Mammary epithelial cell (primary cell): ENCODE measurements at regions of chr16 and their contacts with region 1.

Region 1: GRCh38 chr16:29805378-29806098 is 791 bp upstream of the MAZ start:
- DNase-seq: peak; percentile 96
- H3K4me3 ChIP-seq: peak overlapping the region; percentile 74 to 89 (median 76)
- H3K27ac ChIP-seq: peak overlapping the region; percentile 56
- H3K4me1 ChIP-seq: peaks cover 31% of the 10 kb centered on the region
- H3K27me3 ChIP-seq: no peaks in the 10 kb centered on the region
- CTCF ChIP-seq: no peak

Region 2: DNA sequence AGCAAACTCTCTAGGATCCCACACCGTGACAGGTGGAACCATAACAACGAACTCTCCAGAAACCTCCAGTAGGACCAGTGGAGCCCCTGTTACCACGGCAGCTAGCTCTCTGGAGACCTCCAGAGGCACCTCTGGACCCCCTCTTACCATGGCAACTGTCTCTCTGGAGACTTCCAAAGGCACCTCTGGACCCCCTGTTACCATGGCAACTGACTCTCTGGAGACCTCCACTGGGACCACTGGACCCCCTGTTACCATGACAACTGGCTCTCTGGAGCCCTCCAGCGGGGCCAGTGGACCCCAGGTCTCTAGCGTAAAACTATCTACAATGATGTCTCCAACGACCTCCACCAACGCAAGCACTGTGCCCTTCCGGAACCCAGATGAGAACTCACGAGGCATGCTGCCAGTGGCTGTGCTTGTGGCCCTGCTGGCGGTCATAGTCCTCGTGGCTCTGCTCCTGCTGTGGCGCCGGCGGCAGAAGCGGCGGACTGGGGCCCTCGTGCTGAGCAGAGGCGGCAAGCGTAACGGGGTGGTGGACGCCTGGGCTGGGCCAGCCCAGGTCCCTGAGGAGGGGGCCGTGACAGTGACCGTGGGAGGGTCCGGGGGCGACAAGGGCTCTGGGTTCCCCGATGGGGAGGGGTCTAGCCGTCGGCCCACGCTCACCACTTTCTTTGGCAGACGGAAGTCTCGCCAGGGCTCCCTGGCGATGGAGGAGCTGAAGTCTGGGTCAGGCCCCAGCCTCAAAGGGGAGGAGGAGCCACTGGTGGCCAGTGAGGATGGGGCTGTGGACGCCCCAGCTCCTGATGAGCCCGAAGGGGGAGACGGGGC is 141.2 kb before region 1 on chr16:
- CTCF ChIA-PET with region 1: no interaction called
- dilution Hi-C with region 1: loop called (anchors 5 kb)
- in situ Hi-C with region 1: no loop called
- intact Hi-C with region 1: no loop called
- DNase-seq: no peak
- H3K4me3 ChIP-seq: no peak overlapping the region
- H3K27ac ChIP-seq: no peak overlapping the region
- H3K4me1 ChIP-seq: no peaks in the 10 kb centered on the region
- H3K27me3 ChIP-seq: no peaks in the 10 kb centered on the region
- CTCF ChIP-seq: no peak

Region 3: DNA sequence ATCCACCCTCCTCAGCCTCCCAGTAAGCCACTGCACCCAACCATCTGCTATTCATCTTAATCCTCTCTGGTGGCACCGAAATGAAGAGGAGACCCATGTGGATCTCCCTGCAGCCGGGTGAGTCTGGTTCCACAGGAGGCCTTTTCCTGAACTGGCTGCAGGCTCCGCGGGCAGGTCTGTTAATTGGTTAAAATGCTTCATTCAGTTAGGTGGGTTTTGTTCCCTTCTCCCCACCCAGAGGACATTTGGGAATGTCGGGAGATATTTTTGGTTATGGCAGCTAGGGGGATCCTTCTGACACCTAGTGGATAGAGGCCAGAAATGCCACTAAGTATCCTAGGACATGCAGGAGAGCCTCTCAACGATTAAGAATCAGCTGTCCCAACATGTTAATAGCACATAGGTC is 76.4 kb before region 1 on chr16:
- CTCF ChIA-PET with region 1: no interaction called
- dilution Hi-C with region 1: no loop called
- in situ Hi-C with region 1: no loop called
- intact Hi-C with region 1: no loop called
- DNase-seq: peak; percentile 25
- H3K4me3 ChIP-seq: peak overlapping the region in 1 of 3 experiments; percentile 10
- H3K27ac ChIP-seq: no peak overlapping the region
- H3K4me1 ChIP-seq: no peaks in the 10 kb centered on the region
- H3K27me3 ChIP-seq: no peaks in the 10 kb centered on the region
- CTCF ChIP-seq: peak; percentile 56 to 72

Region 4: DNA sequence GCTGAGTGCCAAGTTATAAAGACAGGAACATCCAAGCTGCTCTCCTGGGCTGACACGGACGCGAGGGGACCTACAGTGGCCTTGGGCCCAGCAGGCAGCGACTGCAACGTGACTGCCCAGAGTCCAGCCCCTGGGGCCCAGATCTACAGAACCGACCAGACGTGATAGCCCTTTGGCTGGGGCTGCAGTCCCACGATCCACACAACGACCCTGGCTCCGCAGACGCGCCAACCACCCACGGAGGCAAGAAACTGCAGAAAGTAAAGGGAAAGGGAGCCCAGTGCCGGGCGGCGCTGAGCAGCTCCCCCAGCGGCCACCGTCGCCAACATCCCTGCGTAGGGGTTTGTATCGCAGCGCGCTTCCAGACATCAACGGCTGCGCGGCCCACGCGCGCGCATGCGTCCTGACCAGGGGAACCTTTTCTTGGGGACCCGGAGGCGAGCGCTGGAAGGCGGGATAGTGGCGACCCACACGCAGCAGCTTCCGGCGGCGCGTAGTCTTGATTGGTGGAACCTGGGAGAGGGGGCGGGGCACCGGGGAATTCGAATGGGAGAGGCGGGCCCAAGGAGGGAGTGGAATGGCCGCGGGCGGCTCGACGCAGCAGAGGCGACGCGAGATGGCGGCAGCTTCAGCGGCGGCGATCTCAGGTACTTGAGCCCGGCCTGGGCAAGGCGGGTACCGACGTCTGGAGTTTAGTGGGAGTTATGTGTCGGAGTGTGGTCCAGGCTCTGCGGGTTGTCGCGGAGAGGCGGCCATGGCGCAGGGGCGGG is 15.2 kb before region 1 on chr16 and contains the start of gene KIF22:
- CTCF ChIA-PET with region 1: interaction called, 3 read pairs
- dilution Hi-C with region 1: no loop called
- in situ Hi-C with region 1: no loop called
- intact Hi-C with region 1: loop called (anchors 1 kb)
- DNase-seq: peak; percentile 99
- H3K4me3 ChIP-seq: peak within 1 kb of the TSS; percentile 77 to 98 (median 81)
- H3K27ac ChIP-seq: peak within 1 kb of the TSS; percentile 58
- H3K4me1 ChIP-seq: peaks cover 21% of the 10 kb centered on the region
- H3K27me3 ChIP-seq: no peaks in the 10 kb centered on the region
- CTCF ChIP-seq: peak; percentile 53 to 75
- total RNA-seq, gene KIF22: 20.2 to 55.0 TPM

Region 5: GRCh38 chr16:29848420-29849297 is 43.1 kb after region 1 on chr16:
- CTCF ChIA-PET with region 1: interaction called, 8 read pairs
- dilution Hi-C with region 1: no loop called
- in situ Hi-C with region 1: no loop called
- intact Hi-C with region 1: loop called (anchors 2 kb)
- DNase-seq: peak; percentile 39
- H3K4me3 ChIP-seq: no peak overlapping the region
- H3K27ac ChIP-seq: no peak overlapping the region
- H3K4me1 ChIP-seq: no peaks in the 10 kb centered on the region
- H3K27me3 ChIP-seq: no peaks in the 10 kb centered on the region
- CTCF ChIP-seq: peak; percentile 86 to 89

Region 6: GRCh38 chr16:30018731-30019158 is 213.2 kb after region 1 on chr16:
- CTCF ChIA-PET with region 1: interaction called, 4 read pairs
- dilution Hi-C with region 1: no loop called
- in situ Hi-C with region 1: loop called in 1 of 2 experiments (anchors 25 kb)
- intact Hi-C with region 1: loop called (anchors 2 kb)
- DNase-seq: peak; percentile 28
- H3K4me3 ChIP-seq: no peak overlapping the region
- H3K27ac ChIP-seq: no peak overlapping the region
- H3K4me1 ChIP-seq: peaks cover 5% of the 10 kb centered on the region
- H3K27me3 ChIP-seq: no peaks in the 10 kb centered on the region
- CTCF ChIP-seq: no peak